ENCODE measurements at regions of chr1 and their contacts with region 1.

Region 1: DNA sequence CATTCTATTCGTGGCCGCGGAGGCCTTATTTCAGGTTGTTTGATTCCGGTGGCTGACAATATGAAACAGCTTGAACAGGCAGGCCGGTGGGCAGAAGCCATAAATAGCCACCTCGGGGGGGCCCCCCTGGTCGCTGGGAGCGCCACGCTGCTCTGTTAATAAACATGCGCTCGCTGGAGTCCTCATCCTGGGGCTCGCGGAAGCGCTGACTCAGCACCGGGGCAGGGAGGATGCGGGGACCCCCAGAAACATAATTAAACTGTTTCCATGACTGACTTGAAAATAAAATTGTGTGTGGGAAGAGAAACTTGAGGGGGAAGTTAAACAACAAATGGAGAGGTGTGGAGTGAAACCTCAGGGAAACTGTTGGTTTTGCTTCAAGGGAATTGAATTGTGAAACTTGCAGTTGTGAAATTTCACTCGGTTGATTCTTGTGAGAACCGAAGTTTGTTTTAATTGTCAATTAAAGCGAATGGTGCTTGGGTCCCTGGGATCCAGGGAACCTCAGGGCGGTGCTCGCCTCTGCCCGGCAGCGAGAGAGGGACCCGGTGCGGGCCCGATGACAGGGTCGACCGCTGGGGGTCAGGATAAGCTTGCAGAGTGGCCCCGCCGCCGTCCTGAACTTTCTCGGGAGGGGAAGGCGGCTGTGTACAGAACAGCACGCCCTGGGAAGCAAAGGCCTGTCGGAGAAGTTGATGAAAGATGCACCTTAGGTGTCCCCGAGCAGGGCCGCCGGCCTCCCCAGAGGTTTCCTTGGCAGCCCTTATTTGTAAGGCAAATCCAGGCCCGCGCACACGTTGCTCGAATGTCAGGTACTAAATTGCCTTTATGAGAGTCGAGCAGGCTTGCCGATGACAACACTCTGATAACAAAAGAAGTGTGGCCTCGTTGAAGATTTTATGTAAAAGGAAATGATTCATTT is 176.9 kb upstream of the LMO4 start:
- DNase-seq: peak; percentile 62
- H3K4me3 Mint-ChIP-seq: peak overlapping the region; percentile 70
- H3K27ac Mint-ChIP-seq: no peak overlapping the region
- H3K4me1 Mint-ChIP-seq: peaks cover 12% of the 10 kb centered on the region
- H3K27me3 Mint-ChIP-seq: peaks cover 34% of the 10 kb centered on the region

Region 2: GRCh38 chr1:87167848-87168525 is 16.2 kb after region 1 on chr1:
- CTCF ChIA-PET with region 1: no interaction called
- intact Hi-C with region 1: no loop called
- DNase-seq: no peak
- H3K4me3 Mint-ChIP-seq: no peak overlapping the region
- H3K27ac Mint-ChIP-seq: no peak overlapping the region
- H3K4me1 Mint-ChIP-seq: no peaks in the 10 kb centered on the region
- H3K27me3 Mint-ChIP-seq: peaks cover 12% of the 10 kb centered on the region

Region 3: GRCh38 chr1:87335175-87335884 is 183.6 kb after region 1 on chr1:
- CTCF ChIA-PET with region 1: no interaction called
- intact Hi-C with region 1: loop called (anchors 1 kb)
- DNase-seq: peak; percentile 69
- H3K4me3 Mint-ChIP-seq: peak overlapping the region; percentile 72
- H3K27ac Mint-ChIP-seq: peak overlapping the region; percentile 76
- H3K4me1 Mint-ChIP-seq: peaks cover 46% of the 10 kb centered on the region
- H3K27me3 Mint-ChIP-seq: peaks cover 27% of the 10 kb centered on the region

Region 4: DNA sequence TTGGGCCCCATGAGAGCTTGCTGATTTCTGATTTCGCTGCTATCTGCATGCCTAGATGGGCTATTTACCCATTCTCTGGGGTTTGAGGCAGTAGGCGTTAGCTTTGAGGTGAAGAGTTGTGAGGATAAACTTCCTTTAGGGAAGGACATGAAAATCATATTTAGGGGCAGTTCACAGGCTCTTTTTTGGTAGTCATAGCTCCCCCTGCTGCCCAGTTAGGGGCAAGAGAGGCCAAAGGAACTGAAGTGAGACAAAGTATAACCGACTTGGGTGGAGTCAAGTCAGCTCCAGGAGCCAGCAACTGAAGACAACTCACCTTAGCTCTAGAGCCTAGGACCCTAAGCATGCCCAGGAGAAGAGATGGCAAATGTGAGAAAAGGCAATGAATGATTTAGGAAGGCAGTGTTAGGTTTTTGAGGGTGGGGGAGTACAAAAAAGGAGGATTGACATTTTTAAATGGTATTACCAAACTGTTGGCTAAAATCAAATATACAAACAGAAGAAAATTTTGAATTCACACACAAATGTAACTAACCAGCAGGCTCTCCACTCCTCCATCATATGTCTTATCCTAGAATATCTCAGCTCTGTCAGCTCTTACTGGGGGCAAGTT is 802.1 kb after region 1 on chr1:
- CTCF ChIA-PET with region 1: no interaction called
- intact Hi-C with region 1: loop called (anchors 5 kb)
- DNase-seq: peak; percentile 62
- H3K4me3 Mint-ChIP-seq: no peak overlapping the region
- H3K27ac Mint-ChIP-seq: no peak overlapping the region
- H3K4me1 Mint-ChIP-seq: no peaks in the 10 kb centered on the region
- H3K27me3 Mint-ChIP-seq: peaks cover 20% of the 10 kb centered on the region

Measured in activated naive CD4-positive, alpha-beta T cell treated with anti-CD3 and anti-CD28 coated beads for 36 hours (primary cell).